PC-3 (cell line): ENCODE measurements at regions of chr2 and their contacts with region 1.

Region 1: DNA sequence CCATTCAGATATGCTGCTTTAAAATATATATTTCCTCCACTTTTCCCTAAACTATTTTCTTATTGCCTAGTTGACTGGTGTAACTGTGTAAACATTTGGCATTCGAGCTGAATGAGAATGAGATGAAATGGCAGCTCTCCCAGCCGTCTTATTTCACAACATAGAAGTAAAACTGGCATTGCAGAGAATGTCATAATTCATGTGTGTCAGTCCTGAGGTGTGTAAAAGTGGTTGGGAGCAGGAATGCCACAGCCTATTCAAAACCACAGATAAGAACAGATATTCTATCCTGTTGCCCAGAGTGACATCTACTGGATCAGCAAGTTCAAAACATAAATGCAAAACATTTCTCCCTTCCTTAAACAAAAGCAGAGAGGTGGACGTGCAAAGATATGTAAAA is 565.5 kb upstream of the CHAC2 start:
- DNase-seq: peak; percentile 95
- ATAC-seq: peak; percentile 99
- H3K4me3 ChIP-seq: no peak overlapping the region
- H3K27ac ChIP-seq: peak overlapping the region; percentile 44
- H3K4me1 ChIP-seq: peaks cover 13% of the 10 kb centered on the region
- H3K27me3 ChIP-seq: no peaks in the 10 kb centered on the region
- CTCF ChIP-seq: peak; percentile 73

Region 2: DNA sequence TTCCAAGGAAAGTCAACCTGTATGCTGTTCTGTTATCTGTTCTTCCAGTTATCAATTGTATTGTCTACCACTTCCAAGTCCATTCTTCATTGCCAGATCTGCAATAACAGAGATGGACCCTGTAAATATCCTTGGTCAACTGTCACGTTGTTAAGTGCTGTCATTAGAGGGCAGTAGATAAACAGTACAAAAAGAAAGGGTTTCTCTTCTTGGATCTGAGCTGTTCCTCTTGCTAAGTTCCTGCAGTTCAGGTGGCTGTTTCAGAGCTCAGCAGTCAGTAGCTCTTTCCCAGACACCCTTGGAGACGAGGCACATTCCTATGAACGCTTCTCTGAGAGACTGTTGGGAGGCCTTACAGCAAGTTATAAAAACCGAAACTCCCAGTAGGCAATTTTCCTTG is 391.6 kb before region 1 on chr2:
- CTCF ChIA-PET with region 1: interaction called, 4 read pairs
- POLR2A ChIA-PET with region 1: no interaction called
- intact Hi-C with region 1: loop called (anchors 1 kb)
- DNase-seq: peak; percentile 69
- ATAC-seq: peak; percentile 97
- H3K4me3 ChIP-seq: no peak overlapping the region
- H3K27ac ChIP-seq: no peak overlapping the region
- H3K4me1 ChIP-seq: no peaks in the 10 kb centered on the region
- H3K27me3 ChIP-seq: no peaks in the 10 kb centered on the region
- CTCF ChIP-seq: peak; percentile 82

Region 3: GRCh38 chr2:52976253-52976949 is 225.7 kb before region 1 on chr2:
- CTCF ChIA-PET with region 1: no interaction called
- POLR2A ChIA-PET with region 1: no interaction called
- intact Hi-C with region 1: loop called (anchors 1 kb)
- DNase-seq: peak; percentile 72
- ATAC-seq: peak; percentile 88
- H3K4me3 ChIP-seq: no peak overlapping the region
- H3K27ac ChIP-seq: no peak overlapping the region
- H3K4me1 ChIP-seq: no peaks in the 10 kb centered on the region
- H3K27me3 ChIP-seq: no peaks in the 10 kb centered on the region
- CTCF ChIP-seq: peak; percentile 93

Region 4: DNA sequence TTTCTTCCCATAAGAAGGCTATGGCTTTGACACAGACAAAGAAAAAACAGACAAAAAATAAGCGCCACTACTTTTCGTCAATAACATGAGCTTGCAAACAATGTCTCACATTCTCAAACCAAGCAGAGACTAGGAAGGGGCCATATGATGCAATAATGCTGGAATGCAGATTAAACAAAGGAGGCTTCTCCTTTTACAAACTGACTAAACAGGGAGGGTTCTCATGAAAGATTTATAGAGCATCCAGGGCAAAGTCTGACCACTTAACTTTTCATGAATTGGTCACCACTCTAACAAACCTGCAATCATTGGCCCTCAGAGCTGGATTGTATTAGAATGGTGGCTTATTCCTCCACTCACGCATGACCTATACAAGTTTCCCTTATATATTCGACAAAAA is 97.8 kb before region 1 on chr2:
- CTCF ChIA-PET with region 1: no interaction called
- POLR2A ChIA-PET with region 1: no interaction called
- intact Hi-C with region 1: loop called (anchors 5 kb)
- DNase-seq: peak; percentile 95
- ATAC-seq: peak; percentile 95
- H3K4me3 ChIP-seq: no peak overlapping the region
- H3K27ac ChIP-seq: peak overlapping the region; percentile 71
- H3K4me1 ChIP-seq: peaks cover 21% of the 10 kb centered on the region
- H3K27me3 ChIP-seq: no peaks in the 10 kb centered on the region
- CTCF ChIP-seq: no peak

Region 5: DNA sequence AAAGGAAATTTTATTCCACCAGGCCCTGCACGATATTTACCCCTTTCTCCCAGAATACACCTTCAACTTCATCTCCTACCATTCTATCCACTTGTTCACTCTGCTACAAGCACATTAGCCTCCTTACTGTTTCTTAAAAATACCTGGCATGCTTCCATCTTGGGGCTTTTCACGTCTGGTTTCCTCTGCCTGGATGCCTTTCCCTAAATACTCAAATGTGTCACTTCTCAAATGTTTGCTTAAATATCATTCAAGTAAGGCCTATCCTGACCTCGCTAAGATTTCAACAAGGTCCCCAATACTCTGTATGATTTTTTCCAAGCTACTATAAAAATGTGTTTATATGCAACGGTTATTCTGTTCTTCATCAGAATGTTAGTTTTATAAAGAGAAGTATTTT is 132.5 kb after region 1 on chr2:
- CTCF ChIA-PET with region 1: no interaction called
- POLR2A ChIA-PET with region 1: no interaction called
- intact Hi-C with region 1: no loop called
- DNase-seq: peak; percentile 70
- ATAC-seq: peak; percentile 96
- H3K4me3 ChIP-seq: no peak overlapping the region
- H3K27ac ChIP-seq: peak overlapping the region; percentile 36; the same call in 1 of the 2 replicates
- H3K4me1 ChIP-seq: peaks cover 12% of the 10 kb centered on the region
- H3K27me3 ChIP-seq: no peaks in the 10 kb centered on the region
- CTCF ChIP-seq: no peak

Region 6: DNA sequence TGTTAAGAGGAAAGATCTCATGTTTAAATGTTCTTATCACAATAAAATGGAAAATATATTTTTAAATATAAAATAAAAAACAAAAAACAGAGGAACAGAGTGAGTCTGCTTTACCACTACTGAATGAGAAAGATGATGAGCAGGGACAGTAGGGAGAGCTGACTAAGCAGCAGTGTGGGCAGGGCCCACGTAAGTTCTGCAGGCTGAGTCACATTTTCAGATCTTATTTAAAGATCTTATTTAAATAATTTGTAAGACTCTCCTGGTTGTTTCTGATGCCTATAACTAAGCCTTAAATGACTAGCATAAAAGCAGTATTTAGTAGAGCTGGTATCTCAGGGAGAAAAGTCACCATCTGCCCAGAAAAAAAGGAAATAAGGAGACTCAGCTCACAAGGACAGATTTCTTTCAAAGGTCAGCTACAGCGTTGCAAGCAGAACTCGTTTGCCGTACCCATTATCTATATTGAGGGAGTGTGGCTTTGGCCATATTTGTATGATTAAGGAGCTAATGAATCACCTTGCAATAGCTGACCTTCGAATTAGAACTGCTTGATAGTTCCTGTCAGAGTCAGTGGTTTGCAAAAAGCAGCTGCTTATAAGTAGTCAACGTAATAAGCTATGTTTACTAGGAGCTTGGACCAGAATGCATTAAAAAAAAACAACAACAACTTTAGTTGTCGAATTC is 243.5 kb after region 1 on chr2:
- CTCF ChIA-PET with region 1: no interaction called
- POLR2A ChIA-PET with region 1: no interaction called
- intact Hi-C with region 1: loop called (anchors 2 kb)
- DNase-seq: peak; percentile 76
- ATAC-seq: peak; percentile 93
- H3K4me3 ChIP-seq: peak overlapping the region; percentile 54
- H3K27ac ChIP-seq: peak overlapping the region; percentile 81
- H3K4me1 ChIP-seq: peaks cover 18% of the 10 kb centered on the region
- H3K27me3 ChIP-seq: no peaks in the 10 kb centered on the region
- CTCF ChIP-seq: no peak